Activated CD8-positive, alpha-beta T cell treated with anti-CD3 and anti-CD28 coated beads for 36 hours (primary cell): ENCODE measurements at regions of chr6 and their contacts with region 1.

Region 1: DNA sequence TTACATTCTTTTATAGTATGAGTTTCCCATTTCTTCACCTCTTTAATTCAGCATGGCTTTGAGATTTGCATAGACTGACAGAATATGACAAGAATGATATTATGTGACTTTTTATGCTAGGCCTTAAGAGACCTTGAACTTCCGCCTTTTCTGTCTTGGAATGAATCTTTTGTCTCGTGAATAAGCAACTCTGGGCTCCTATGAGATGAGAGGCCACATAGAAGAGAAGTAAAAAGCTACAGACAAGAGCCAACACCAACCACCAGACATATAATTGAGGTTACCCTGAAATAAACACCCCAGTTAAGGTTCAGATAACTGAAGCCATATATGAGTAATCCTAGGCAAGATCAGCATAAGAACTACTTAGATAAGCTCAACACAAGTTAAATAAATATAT is 600.8 kb downstream of the MEI4 start:
- DNase-seq: no peak
- ATAC-seq: no peak
- H3K4me3 Mint-ChIP-seq: no peak overlapping the region
- H3K27ac Mint-ChIP-seq: no peak overlapping the region
- H3K4me1 Mint-ChIP-seq: no peaks in the 10 kb centered on the region
- H3K27me3 Mint-ChIP-seq: no peaks in the 10 kb centered on the region
- CTCF ChIP-seq: no peak

Region 2: DNA sequence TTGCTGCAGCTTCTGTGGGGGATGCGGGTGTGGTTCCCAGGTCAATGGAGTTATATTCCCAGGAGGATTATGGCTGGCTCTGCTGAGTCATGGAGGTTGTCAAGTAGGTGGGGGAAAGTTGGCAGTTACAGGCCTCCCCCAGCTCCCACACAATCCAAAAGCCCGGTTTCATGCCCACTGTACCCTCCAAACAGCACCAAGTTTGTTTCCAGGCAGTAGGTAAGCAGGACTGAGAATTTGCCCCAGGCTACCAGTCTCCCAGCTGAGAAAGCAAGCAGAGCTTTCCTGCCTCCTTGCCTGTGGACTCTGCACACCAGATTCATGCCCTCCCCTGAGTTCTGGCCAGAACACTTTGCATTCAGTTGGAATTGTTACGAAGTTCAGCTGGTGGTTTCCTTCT is 22.6 kb before region 1 on chr6:
- CTCF ChIA-PET with region 1: no interaction called
- POLR2A ChIA-PET with region 1: no interaction called
- intact Hi-C with region 1: no loop called
- DNase-seq: no peak
- ATAC-seq: no peak
- H3K4me3 Mint-ChIP-seq: no peak overlapping the region
- H3K27ac Mint-ChIP-seq: no peak overlapping the region
- H3K4me1 Mint-ChIP-seq: no peaks in the 10 kb centered on the region
- H3K27me3 Mint-ChIP-seq: no peaks in the 10 kb centered on the region
- CTCF ChIP-seq: no peak

Region 3: GRCh38 chr6:78324213-78324612 is 70.6 kb after region 1 on chr6:
- CTCF ChIA-PET with region 1: no interaction called
- POLR2A ChIA-PET with region 1: no interaction called
- intact Hi-C with region 1: loop called (anchors 1 kb)
- DNase-seq: no peak
- ATAC-seq: no peak
- H3K4me3 Mint-ChIP-seq: no peak overlapping the region
- H3K27ac Mint-ChIP-seq: no peak overlapping the region
- H3K4me1 Mint-ChIP-seq: no peaks in the 10 kb centered on the region
- H3K27me3 Mint-ChIP-seq: no peaks in the 10 kb centered on the region
- CTCF ChIP-seq: no peak